ENCODE measurements at regions of chr5 and their contacts with region 1.

Region 1: GRCh38 chr5:69334793-69335268 is 2.2 kb upstream of the CCDC125 start:
- DNase-seq: peak; percentile 74 to 87 (median 82)
- H3K4me3 ChIP-seq: no peak overlapping the region
- H3K27ac ChIP-seq: no peak overlapping the region
- H3K4me1 ChIP-seq: peaks cover 4% of the 10 kb centered on the region
- H3K27me3 ChIP-seq: no peaks in the 10 kb centered on the region
- CTCF ChIP-seq: peak; percentile 36 to 50 (median 38)
- EP300 ChIP-seq: no peak
- POLR2A ChIP-seq: no peak

Region 2: DNA sequence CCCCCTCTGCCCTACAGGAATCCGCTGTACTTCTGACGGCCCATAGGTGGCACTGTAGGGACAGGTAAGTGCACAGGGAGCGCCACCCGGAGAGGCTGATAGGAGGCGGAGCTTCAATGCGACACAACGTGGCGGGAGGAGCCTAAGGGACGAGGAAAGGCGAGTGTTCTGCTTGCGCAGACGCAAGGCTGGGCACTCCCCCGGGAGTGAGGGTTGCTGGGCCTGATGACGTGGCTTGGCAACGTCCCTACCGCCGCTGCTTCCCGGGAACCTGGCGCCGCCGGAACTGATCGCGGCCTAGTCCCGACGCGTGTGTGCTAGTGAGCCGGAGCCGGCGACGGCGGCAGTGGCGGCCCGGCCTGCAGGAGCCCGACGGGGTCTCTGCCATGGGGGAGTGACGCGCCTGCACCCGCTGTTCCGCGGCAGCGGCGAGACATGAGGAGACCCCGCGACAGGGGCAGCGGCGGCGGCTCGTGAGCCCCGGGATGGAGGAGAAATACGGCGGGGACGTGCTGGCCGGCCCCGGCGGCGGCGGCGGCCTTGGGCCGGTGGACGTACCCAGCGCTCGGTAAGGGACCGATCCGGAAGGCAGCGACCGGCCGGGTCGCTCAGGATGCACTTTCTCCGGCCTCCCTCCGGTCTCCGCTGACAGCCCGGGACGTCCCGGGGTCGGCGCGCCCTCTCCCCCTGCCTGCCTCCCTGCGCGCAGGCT is 240.9 kb before region 1 on chr5 and contains the start of gene SLC30A5:
- intact Hi-C with region 1: loop called in 1 of 4 experiments (anchors 10 kb)
- DNase-seq: peak; percentile 98 to 99 (median 99)
- H3K4me3 ChIP-seq: peak within 1 kb of the TSS; percentile 80
- H3K27ac ChIP-seq: peak within 1 kb of the TSS; percentile 63 to 86
- H3K4me1 ChIP-seq: peaks cover 2% of the 10 kb centered on the region
- H3K27me3 ChIP-seq: no peaks in the 10 kb centered on the region
- CTCF ChIP-seq: peak; percentile 85 to 93 (median 92)
- EP300 ChIP-seq: no peak
- POLR2A ChIP-seq: peak; percentile 74
- total RNA-seq, gene SLC30A5: 34.9 to 61.5 (median 46.5) TPM

Region 3: GRCh38 chr5:69166686-69167492 is 167.9 kb before region 1 on chr5 and contains the start of gene CCNB1:
- intact Hi-C with region 1: loop called in 1 of 4 experiments (anchors 10 kb)
- DNase-seq: peak; percentile 96 to 98 (median 97)
- H3K4me3 ChIP-seq: peak within 1 kb of the TSS; percentile 65
- H3K27ac ChIP-seq: peak within 1 kb of the TSS in 1 of 2 donors; percentile 14
- H3K4me1 ChIP-seq: peaks cover 1% of the 10 kb centered on the region
- H3K27me3 ChIP-seq: no peaks in the 10 kb centered on the region
- CTCF ChIP-seq: no peak
- EP300 ChIP-seq: no peak
- POLR2A ChIP-seq: no peak
- total RNA-seq, gene CCNB1: 3.5 to 9.2 (median 6.2) TPM

Region 4: GRCh38 chr5:69217548-69218526 is 117.0 kb before region 1 on chr5:
- intact Hi-C with region 1: no loop called
- DNase-seq: peak; percentile 97 to 99 (median 98)
- H3K4me3 ChIP-seq: peak overlapping the region; percentile 89
- H3K27ac ChIP-seq: peak overlapping the region; percentile 53 to 82
- H3K4me1 ChIP-seq: no peaks in the 10 kb centered on the region
- H3K27me3 ChIP-seq: no peaks in the 10 kb centered on the region
- CTCF ChIP-seq: peak in 2 of 3 donors; percentile 49 to 54
- EP300 ChIP-seq: no peak
- POLR2A ChIP-seq: peak; percentile 86

Measured in ovary (tissue), 10 donors.